Activated CD4-positive, alpha-beta T cell treated with anti-CD3 and anti-CD28 coated beads, Interleukin-2, amount 10 ng/mL, durations not matched to agents 7 days and 5 days (primary cell): ENCODE measurements at regions of chr6 and their contacts with region 1.

Region 1: DNA sequence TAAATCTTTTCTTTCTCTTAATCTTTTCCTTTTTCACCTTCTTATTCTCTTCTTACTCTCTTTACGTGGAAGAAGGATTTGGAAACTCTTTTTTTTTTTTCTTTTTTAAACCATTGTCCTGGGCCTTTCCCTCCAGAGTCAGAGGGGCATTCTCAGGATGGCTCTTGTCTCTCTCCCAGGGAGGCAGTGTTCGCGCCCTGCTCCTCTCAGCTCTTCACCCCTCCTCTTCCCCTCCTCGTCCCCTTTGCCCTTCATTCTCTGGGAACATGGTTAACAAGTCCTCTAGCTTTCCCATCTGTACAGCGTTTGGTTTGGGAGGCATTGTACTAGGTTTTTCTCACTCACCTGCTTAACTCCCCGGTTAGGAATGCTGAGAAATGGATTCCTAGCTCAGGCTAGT is 52.0 kb upstream of the TFB1M start:
- DNase-seq: no peak
- H3K4me3 Mint-ChIP-seq: no peak overlapping the region
- H3K27ac Mint-ChIP-seq: no peak overlapping the region
- H3K4me1 Mint-ChIP-seq: no peaks in the 10 kb centered on the region
- H3K27me3 Mint-ChIP-seq: no peaks in the 10 kb centered on the region

Region 2: GRCh38 chr6:155351273-155352129 is 14.8 kb before region 1 on chr6:
- CTCF ChIA-PET with region 1: no interaction called
- POLR2A ChIA-PET with region 1: no interaction called
- DNase-seq: no peak
- H3K4me3 Mint-ChIP-seq: no peak overlapping the region
- H3K27ac Mint-ChIP-seq: no peak overlapping the region
- H3K4me1 Mint-ChIP-seq: no peaks in the 10 kb centered on the region
- H3K27me3 Mint-ChIP-seq: no peaks in the 10 kb centered on the region

Region 3: DNA sequence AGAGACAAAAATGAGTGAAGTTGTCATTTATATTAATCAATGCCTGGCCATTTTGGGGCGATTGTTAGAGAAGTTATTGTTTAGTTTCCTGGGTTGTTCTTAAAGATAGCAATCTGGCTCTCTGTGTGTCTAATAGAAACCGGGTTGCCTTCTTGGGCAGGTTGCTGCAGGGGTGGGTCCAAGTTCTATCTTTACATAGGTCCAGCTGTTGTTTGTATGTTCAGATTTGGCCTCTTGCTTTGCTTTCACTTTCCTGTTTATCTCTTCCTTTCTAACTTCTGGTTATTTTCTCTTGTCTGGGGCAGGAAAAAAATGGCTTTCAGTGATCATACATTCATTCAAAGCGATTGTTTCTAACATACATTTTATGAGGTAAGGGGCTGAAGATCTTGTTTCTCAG is 217.7 kb after region 1 on chr6:
- CTCF ChIA-PET with region 1: no interaction called
- POLR2A ChIA-PET with region 1: interaction called, 15 read pairs
- DNase-seq: no peak
- H3K4me3 Mint-ChIP-seq: no peak overlapping the region
- H3K27ac Mint-ChIP-seq: no peak overlapping the region
- H3K4me1 Mint-ChIP-seq: no peaks in the 10 kb centered on the region
- H3K27me3 Mint-ChIP-seq: no peaks in the 10 kb centered on the region